BJ (cell line): ENCODE measurements at regions of chr14 and their contacts with region 1.

Region 1: GRCh38 chr14:51546603-51547258 is 105.0 kb upstream of the FRMD6 start:
- DNase-seq: no peak
- H3K4me3 ChIP-seq: no peak overlapping the region
- H3K27me3 ChIP-seq: no peaks in the 10 kb centered on the region
- CTCF ChIP-seq: no peak

Region 2: GRCh38 chr14:51328064-51328771 is 218.5 kb before region 1 on chr14:
- CTCF ChIA-PET with region 1: no interaction called
- POLR2A ChIA-PET with region 1: interaction called, 29 read pairs
- DNase-seq: no peak
- H3K4me3 ChIP-seq: no peak overlapping the region
- H3K27me3 ChIP-seq: no peaks in the 10 kb centered on the region
- CTCF ChIP-seq: no peak

Region 3: GRCh38 chr14:51516706-51517395 is 29.9 kb before region 1 on chr14:
- CTCF ChIA-PET with region 1: no interaction called
- POLR2A ChIA-PET with region 1: interaction called, 37 read pairs
- DNase-seq: no peak
- H3K4me3 ChIP-seq: no peak overlapping the region
- H3K27me3 ChIP-seq: no peaks in the 10 kb centered on the region
- CTCF ChIP-seq: no peak

Region 4: GRCh38 chr14:51527073-51527472 is 19.7 kb before region 1 on chr14:
- CTCF ChIA-PET with region 1: no interaction called
- POLR2A ChIA-PET with region 1: no interaction called
- DNase-seq: no peak
- H3K4me3 ChIP-seq: no peak overlapping the region
- H3K27me3 ChIP-seq: no peaks in the 10 kb centered on the region
- CTCF ChIP-seq: no peak

Region 5: GRCh38 chr14:51561141-51561540 is 14.4 kb after region 1 on chr14:
- CTCF ChIA-PET with region 1: no interaction called
- POLR2A ChIA-PET with region 1: no interaction called
- DNase-seq: no peak
- H3K4me3 ChIP-seq: no peak overlapping the region
- H3K27me3 ChIP-seq: no peaks in the 10 kb centered on the region
- CTCF ChIP-seq: no peak

Region 6: GRCh38 chr14:51677266-51677665 is 130.5 kb after region 1 on chr14:
- CTCF ChIA-PET with region 1: no interaction called
- POLR2A ChIA-PET with region 1: no interaction called
- DNase-seq: no peak
- H3K4me3 ChIP-seq: no peak overlapping the region
- H3K27me3 ChIP-seq: no peaks in the 10 kb centered on the region
- CTCF ChIP-seq: no peak

Region 7: GRCh38 chr14:51865953-51866747 is 319.4 kb after region 1 on chr14:
- CTCF ChIA-PET with region 1: no interaction called
- POLR2A ChIA-PET with region 1: no interaction called
- DNase-seq: no peak
- H3K4me3 ChIP-seq: no peak overlapping the region
- H3K27me3 ChIP-seq: no peaks in the 10 kb centered on the region
- CTCF ChIP-seq: no peak